PC-3 (cell line): ENCODE measurements at regions of chr2 and their contacts with region 1.

Region 1: DNA sequence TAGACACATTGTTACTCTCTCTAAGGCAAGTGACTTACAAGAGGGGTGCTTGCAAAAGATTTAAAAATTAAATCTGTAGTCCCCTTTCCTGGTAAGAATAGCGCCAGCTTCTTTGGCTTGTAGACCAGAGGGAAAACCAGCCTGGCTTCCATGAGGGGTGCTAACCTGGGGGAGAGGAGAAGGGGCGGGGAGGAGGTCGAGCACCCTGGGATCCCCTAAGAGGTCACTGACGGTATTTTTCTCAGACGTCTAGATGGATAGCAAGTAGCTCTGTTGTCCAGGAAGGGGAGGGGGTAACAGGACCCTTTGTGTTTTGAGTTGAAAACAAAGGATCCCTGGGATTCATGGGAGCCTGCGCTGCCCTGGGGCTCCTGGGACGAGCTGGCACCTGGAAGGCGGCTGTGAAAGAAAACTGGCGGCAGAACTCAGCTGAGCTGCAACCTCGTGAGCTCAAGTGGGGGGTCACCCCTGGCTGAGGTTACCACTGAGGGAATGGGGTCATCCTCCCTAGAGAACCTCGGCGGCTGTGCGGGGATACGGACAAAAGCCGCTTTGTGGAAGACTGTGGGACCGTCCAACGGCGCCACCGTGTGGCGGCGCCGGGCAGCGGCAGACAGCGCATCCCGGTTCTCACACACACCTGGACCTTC is 37.8 kb upstream of the MRPL19 start:
- DNase-seq: peak; percentile 80
- ATAC-seq: peak; percentile 52
- H3K4me3 ChIP-seq: peak overlapping the region; percentile 53; the same call in 1 of the 2 replicates
- H3K27ac ChIP-seq: peak overlapping the region; percentile 93; the same call in 1 of the 2 replicates
- H3K4me1 ChIP-seq: peaks cover 60% of the 10 kb centered on the region
- H3K27me3 ChIP-seq: no peaks in the 10 kb centered on the region
- CTCF ChIP-seq: peak; percentile 96

Region 2: GRCh38 chr2:75466708-75467311 is 142.0 kb before region 1 on chr2:
- CTCF ChIA-PET with region 1: interaction called, 14 read pairs
- POLR2A ChIA-PET with region 1: no interaction called
- intact Hi-C with region 1: loop called (anchors 1 kb)
- DNase-seq: peak; percentile 65
- ATAC-seq: no peak; the same call in 1 of the 2 replicates
- H3K4me3 ChIP-seq: no peak overlapping the region
- H3K27ac ChIP-seq: no peak overlapping the region
- H3K4me1 ChIP-seq: no peaks in the 10 kb centered on the region
- H3K27me3 ChIP-seq: no peaks in the 10 kb centered on the region
- CTCF ChIP-seq: peak; percentile 81

Region 3: GRCh38 chr2:75523313-75524275 is 85.2 kb before region 1 on chr2:
- CTCF ChIA-PET with region 1: interaction called, 7 read pairs
- POLR2A ChIA-PET with region 1: no interaction called
- intact Hi-C with region 1: loop called (anchors 5 kb)
- DNase-seq: peak; percentile 98
- ATAC-seq: peak; percentile 82
- H3K4me3 ChIP-seq: 0 out of 2 replicates have a peak overlapping the region, but pooled peaks have one; percentile 12
- H3K27ac ChIP-seq: peak overlapping the region; percentile 92
- H3K4me1 ChIP-seq: peaks cover 68% of the 10 kb centered on the region
- H3K27me3 ChIP-seq: no peaks in the 10 kb centered on the region
- CTCF ChIP-seq: no peak

Region 4: DNA sequence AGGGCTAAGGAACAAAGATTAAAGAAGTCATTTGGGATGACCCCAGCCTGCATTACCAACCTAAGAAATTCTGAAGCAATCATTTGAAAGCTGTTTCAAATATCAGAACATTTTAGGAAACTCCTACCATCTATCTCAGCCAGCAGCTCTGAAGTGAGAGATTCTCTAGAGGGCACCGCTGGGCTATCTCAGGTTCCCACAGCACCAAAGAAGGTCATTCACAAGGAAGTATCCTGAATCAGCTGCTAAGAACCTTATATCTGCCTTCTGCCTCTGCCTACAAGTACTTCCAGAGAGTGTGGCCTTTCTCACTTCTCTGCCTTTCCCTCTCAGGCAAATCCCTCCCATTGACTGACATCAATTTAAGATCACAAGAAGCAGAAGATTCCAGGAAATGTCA is 34.7 kb before region 1 on chr2:
- CTCF ChIA-PET with region 1: interaction called, 15 read pairs
- POLR2A ChIA-PET with region 1: no interaction called
- intact Hi-C with region 1: loop called (anchors 1 kb)
- DNase-seq: peak; percentile 37
- ATAC-seq: peak; percentile 88
- H3K4me3 ChIP-seq: no peak overlapping the region
- H3K27ac ChIP-seq: no peak overlapping the region
- H3K4me1 ChIP-seq: peaks cover 33% of the 10 kb centered on the region
- H3K27me3 ChIP-seq: no peaks in the 10 kb centered on the region
- CTCF ChIP-seq: peak; percentile 51

Region 5: GRCh38 chr2:75595551-75596395 is 13.0 kb before region 1 on chr2:
- CTCF ChIA-PET with region 1: interaction called, 23 read pairs
- POLR2A ChIA-PET with region 1: interaction called, 3 read pairs
- intact Hi-C with region 1: no loop called
- DNase-seq: peak; percentile 90
- ATAC-seq: peak; percentile 69
- H3K4me3 ChIP-seq: no peak overlapping the region
- H3K27ac ChIP-seq: peak overlapping the region; percentile 53
- H3K4me1 ChIP-seq: peaks cover 67% of the 10 kb centered on the region
- H3K27me3 ChIP-seq: no peaks in the 10 kb centered on the region
- CTCF ChIP-seq: no peak